ENCODE measurements at regions of chr14 and their contacts with region 1.

Region 1: DNA sequence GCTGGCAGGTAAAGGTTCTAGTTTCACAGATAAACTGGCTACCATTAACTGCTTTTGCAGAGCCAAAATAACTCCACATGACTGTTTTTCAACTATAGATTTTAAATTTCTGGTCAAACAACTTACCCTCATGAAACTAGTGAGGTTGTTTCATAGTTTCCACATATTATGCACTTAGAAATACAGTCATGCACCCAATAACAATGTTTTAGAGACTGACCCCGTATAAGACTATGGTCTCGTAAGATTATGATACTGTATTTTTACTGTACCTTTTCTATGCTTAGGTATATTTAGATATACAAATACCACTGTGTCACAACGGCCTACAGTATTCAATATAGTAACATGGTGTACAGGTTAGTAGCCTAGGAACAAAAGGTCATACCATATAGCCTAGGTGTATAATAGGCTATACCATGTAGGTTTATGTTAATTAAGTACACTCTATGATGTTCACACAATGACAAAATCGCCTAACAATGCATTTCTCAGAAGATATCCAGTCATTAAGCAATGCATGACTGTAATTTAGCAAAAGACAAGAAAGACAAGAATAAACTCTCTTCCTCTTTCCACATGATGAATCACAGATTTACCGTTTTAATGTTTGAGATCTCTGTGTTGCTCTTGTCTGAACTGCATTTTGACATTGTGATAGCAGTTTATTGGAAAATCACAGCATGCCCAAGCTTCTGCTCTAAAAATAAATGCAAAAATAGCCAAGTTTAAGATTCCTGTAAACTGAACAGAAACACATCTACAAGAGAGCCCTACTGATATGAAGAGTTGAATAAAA is 17.1 kb downstream of the DICER1 start:
- ATAC-seq: peak in 2 of 8 experiments; percentile 27 to 83
- H3K4me3 ChIP-seq: no peak overlapping the region
- H3K27ac ChIP-seq: no peak overlapping the region
- H3K4me1 ChIP-seq: peaks cover 15 to 28% of the 10 kb centered on the region in 2 donors

Region 2: DNA sequence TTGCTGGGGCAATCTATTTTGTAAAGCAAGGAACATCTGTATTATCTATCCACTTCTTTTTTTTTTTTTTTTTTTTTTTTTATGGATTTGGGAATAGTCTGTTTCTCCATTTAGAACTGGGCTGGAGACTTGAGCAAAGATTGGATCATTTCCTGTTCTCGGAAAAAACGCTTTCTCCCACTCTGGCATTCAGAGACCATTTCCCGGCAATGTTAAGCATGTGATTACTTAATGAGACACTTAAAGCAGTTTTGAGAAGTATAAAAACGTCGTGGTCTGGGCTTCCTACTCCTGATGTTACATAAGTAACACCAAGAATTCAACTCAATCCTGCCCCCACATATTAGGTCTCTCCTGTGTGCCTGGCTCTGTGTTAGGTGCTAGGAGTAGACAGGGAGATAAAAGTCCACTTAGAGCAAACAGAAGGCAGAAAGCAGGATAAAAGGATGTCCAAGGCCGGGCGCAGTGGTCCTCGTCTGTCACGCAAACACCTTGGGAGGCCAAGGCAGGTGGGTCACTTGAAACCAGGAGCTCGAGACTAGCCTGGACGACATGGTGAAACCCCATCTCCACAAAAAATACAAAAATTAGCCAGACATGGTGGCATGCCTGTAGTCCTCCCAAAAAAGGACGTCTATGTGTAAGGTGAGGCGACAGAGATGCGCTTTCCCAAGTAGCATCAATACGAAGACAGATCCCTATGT is 218.2 kb before region 1 on chr14:
- in situ Hi-C with region 1: no loop called
- ATAC-seq: no peak
- H3K4me3 ChIP-seq: no peak overlapping the region
- H3K27ac ChIP-seq: no peak overlapping the region
- H3K4me1 ChIP-seq: no peaks in the 10 kb centered on the region

Region 3: DNA sequence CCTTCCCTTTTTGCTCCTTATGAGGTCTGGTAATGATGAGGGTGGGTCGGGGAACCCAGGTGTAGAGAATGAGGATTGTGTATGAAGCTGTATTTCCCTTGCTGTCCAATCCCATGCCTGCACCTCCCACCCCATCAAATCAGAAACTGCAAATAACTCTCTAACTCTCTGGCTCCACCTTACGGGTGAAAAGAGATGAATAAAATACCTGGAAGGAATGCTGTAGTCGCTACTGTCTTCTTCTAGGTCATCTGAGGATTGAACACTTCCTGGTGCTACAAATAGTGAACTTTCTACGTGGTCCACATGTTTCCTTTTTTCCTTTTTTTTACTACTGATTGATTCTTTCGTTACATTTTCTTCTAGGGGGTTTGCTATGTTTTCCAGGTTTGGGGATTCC is 56.0 kb after region 1 on chr14:
- in situ Hi-C with region 1: no loop called
- ATAC-seq: peak in 1 of 8 experiments; percentile 66
- H3K4me3 ChIP-seq: no peak overlapping the region
- H3K27ac ChIP-seq: no peak overlapping the region
- H3K4me1 ChIP-seq: no peaks in the 10 kb centered on the region

Region 4: GRCh38 chr14:95287176-95287754 is 147.0 kb after region 1 on chr14:
- in situ Hi-C with region 1: no loop called
- ATAC-seq: no peak
- H3K4me3 ChIP-seq: no peak overlapping the region
- H3K27ac ChIP-seq: no peak overlapping the region
- H3K4me1 ChIP-seq: peaks cover 3 to 9% of the 10 kb centered on the region in 2 donors

Region 5: GRCh38 chr14:95424529-95424928 is 284.3 kb after region 1 on chr14:
- in situ Hi-C with region 1: loop called in 1 of 9 experiments (anchors 25 kb)
- ATAC-seq: no peak
- H3K4me3 ChIP-seq: no peak overlapping the region
- H3K27ac ChIP-seq: no peak overlapping the region
- H3K4me1 ChIP-seq: no peaks in the 10 kb centered on the region

Region 6: GRCh38 chr14:95534299-95535225 is 394.3 kb after region 1 on chr14 and contains the start of gene GLRX5:
- in situ Hi-C with region 1: loop called in 1 of 9 experiments (anchors 25 kb)
- ATAC-seq: peak; percentile 87 to 93 (median 90)
- H3K4me3 ChIP-seq: peak within 1 kb of the TSS; percentile 75 to 99 (median 80)
- H3K27ac ChIP-seq: peak within 1 kb of the TSS; percentile 79 to 92
- H3K4me1 ChIP-seq: peaks cover 21 to 29% of the 10 kb centered on the region in 2 donors
- total RNA-seq, gene GLRX5: 26.4 to 62.7 (median 41.4) TPM